CD8-positive, alpha-beta memory T cell (primary cell): ENCODE measurements at regions of chr11 and their contacts with region 1.

Region 1: DNA sequence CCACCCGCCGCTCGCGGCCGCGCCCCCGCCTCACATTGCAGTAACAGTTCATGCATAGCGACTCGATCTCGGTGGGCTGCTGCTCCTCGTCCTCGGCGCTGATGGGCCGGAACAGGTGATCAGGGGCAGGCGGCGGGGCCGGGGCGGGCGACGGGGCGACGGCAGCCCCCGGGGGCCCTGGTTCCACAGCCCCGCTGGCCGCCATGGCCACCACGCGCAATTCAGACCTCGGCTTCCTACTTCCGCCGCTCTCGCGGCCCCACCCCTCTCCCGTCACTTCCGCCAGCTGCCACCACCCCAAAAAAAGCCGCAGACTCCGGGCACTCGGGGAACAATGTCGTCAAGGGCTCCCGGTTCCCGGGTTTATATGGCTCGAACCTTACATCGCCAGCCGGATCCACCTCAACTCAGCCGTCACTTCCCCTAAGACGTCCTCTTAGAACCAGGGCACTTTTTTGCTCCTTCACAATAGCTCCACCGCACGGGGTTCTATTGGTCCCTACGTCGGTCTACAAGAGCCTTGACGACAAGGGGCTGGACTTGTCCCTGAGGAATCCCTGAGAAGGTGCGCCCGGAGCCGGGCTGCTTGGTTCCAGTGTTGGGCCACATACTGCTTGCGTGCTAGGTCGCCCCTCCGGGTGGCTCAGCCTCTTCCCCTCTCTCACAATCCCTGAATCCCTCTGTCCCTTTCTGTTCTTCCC is at the start of gene ZPR1:
- DNase-seq: peak; percentile 82 to 91 (median 85)
- H3K4me3 ChIP-seq: peak within 1 kb of the TSS; percentile 93
- H3K4me3 Mint-ChIP-seq: peak within 1 kb of the TSS; percentile 93 to 100 (median 97)
- H3K27ac ChIP-seq: peak within 1 kb of the TSS; percentile 96
- H3K27ac Mint-ChIP-seq: peak within 1 kb of the TSS; percentile 88 to 99 (median 98)
- H3K4me1 ChIP-seq: peaks cover 29% of the 10 kb centered on the region
- H3K4me1 Mint-ChIP-seq: peaks cover 46 to 69% (median 57%) of the 10 kb centered on the region in 3 donors
- H3K27me3 ChIP-seq: no peaks in the 10 kb centered on the region
- H3K27me3 Mint-ChIP-seq: no peaks in the 10 kb centered on the region
- total RNA-seq, gene ZPR1: 118 to 124 TPM

Region 2: DNA sequence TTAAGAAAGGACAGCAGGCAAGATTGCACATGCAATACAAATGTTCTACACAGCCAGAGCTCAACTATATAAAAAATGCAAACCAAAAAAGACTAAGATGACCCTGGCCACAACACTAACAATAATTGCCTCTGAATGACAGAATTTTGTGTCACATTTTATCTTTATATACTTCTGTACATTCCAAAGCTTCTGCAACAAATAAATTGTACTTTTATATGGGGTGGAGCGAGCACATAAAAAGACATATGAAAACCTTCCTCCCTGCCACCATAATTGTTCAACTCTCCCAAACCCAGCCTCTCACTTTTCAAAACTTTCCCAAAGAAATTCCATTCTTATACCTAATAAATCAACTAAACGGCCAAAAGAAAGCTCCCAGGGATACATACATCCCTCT is 25.8 kb before region 1 on chr11:
- CTCF ChIA-PET with region 1: no interaction called
- POLR2A ChIA-PET with region 1: no interaction called
- DNase-seq: no peak
- H3K4me3 ChIP-seq: no peak overlapping the region
- H3K4me3 Mint-ChIP-seq: no peak overlapping the region
- H3K27ac ChIP-seq: no peak overlapping the region
- H3K27ac Mint-ChIP-seq: no peak overlapping the region
- H3K4me1 ChIP-seq: no peaks in the 10 kb centered on the region
- H3K4me1 Mint-ChIP-seq: peaks cover 0 to 21% (median 16%) of the 10 kb centered on the region in 3 donors
- H3K27me3 ChIP-seq: no peaks in the 10 kb centered on the region
- H3K27me3 Mint-ChIP-seq: no peaks in the 10 kb centered on the region

Region 3: DNA sequence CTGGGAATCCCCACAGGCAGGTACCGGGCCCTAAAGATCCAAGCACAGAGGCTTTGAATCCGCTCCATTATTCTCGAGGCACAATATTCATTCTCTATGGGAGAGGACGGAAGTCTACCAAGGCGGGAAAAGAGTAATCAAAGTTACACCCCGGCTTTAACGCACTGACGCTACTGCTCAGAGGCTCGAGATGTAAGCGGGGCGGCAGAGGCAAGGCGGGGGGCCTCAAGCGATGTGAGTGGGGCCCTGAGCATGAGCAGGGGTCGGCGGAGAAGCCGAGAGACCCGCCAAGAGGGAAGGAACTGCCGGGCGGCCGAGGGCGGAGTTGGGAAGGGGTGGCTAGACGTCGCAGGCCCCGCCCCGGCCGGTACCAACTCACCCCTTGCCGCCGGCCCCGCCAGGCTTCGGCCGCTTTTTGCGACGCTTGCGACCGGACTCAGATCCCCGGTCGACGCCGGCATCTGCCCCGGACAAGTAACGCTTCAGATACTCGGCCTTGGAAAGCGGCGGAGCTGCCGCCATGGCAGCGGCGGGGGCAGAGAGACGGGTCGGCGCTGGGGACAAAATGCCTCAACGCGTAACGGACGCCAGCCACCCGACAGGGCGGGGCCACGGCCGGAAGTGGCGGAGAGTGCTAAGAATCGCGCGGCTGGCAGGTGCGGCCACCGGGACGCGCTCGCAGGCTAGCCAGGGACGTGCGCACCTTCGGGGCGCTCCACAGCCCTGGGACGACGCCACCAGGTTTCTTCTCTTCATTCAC is 15.3 kb before region 1 on chr11 and contains the start of gene BUD13:
- CTCF ChIA-PET with region 1: interaction called, 14 read pairs
- POLR2A ChIA-PET with region 1: interaction called, 24 read pairs
- DNase-seq: peak; percentile 90 to 96 (median 94)
- H3K4me3 ChIP-seq: peak within 1 kb of the TSS; percentile 87
- H3K4me3 Mint-ChIP-seq: peak within 1 kb of the TSS; percentile 90 to 99 (median 94)
- H3K27ac ChIP-seq: peak within 1 kb of the TSS; percentile 88
- H3K27ac Mint-ChIP-seq: peak within 1 kb of the TSS; percentile 90 to 100 (median 98)
- H3K4me1 ChIP-seq: peaks cover 25% of the 10 kb centered on the region
- H3K4me1 Mint-ChIP-seq: peaks cover 31 to 46% (median 41%) of the 10 kb centered on the region in 3 donors
- H3K27me3 ChIP-seq: no peaks in the 10 kb centered on the region
- H3K27me3 Mint-ChIP-seq: no peaks in the 10 kb centered on the region
- total RNA-seq, gene BUD13: 31.4 to 32.3 TPM

Region 4: GRCh38 chr11:116853461-116854073 is 65.6 kb after region 1 on chr11:
- CTCF ChIA-PET with region 1: interaction called, 34 read pairs
- POLR2A ChIA-PET with region 1: interaction called, 5 read pairs
- DNase-seq: peak; percentile 27 to 80 (median 70)
- H3K4me3 ChIP-seq: peak overlapping the region; percentile 27
- H3K4me3 Mint-ChIP-seq: peak overlapping the region; percentile 29 to 85 (median 74)
- H3K27ac ChIP-seq: peak overlapping the region; percentile 68
- H3K27ac Mint-ChIP-seq: peak overlapping the region; percentile 83 to 99 (median 92)
- H3K4me1 ChIP-seq: peaks cover 73% of the 10 kb centered on the region
- H3K4me1 Mint-ChIP-seq: peaks cover 73 to 81% (median 78%) of the 10 kb centered on the region in 3 donors
- H3K27me3 ChIP-seq: no peaks in the 10 kb centered on the region
- H3K27me3 Mint-ChIP-seq: peaks cover 0 to 2% of the 10 kb centered on the region in 2 donors

Region 5: GRCh38 chr11:116865696-116866095 is 77.8 kb after region 1 on chr11:
- CTCF ChIA-PET with region 1: no interaction called
- POLR2A ChIA-PET with region 1: no interaction called
- DNase-seq: no peak
- H3K4me3 ChIP-seq: no peak overlapping the region
- H3K4me3 Mint-ChIP-seq: no peak overlapping the region
- H3K27ac ChIP-seq: no peak overlapping the region
- H3K27ac Mint-ChIP-seq: peak overlapping the region in 4 of 8 donors; percentile 17 to 65 (median 39)
- H3K4me1 ChIP-seq: no peaks in the 10 kb centered on the region
- H3K4me1 Mint-ChIP-seq: peaks cover 0 to 5% (median 0%) of the 10 kb centered on the region in 3 donors
- H3K27me3 ChIP-seq: no peaks in the 10 kb centered on the region
- H3K27me3 Mint-ChIP-seq: no peaks in the 10 kb centered on the region

Region 6: GRCh38 chr11:117098269-117099232 is 310.6 kb after region 1 on chr11 and contains the start of gene SIK3:
- CTCF ChIA-PET with region 1: interaction called, 15 read pairs
- POLR2A ChIA-PET with region 1: interaction called, 5 read pairs
- DNase-seq: peak; percentile 94 to 96 (median 94)
- H3K4me3 ChIP-seq: peak within 1 kb of the TSS; percentile 87
- H3K4me3 Mint-ChIP-seq: peak within 1 kb of the TSS; percentile 90 to 99 (median 97)
- H3K27ac ChIP-seq: peak within 1 kb of the TSS; percentile 99
- H3K27ac Mint-ChIP-seq: peak within 1 kb of the TSS; percentile 99 to 100 (median 100)
- H3K4me1 ChIP-seq: peaks cover 44% of the 10 kb centered on the region
- H3K4me1 Mint-ChIP-seq: peaks cover 58 to 61% (median 59%) of the 10 kb centered on the region in 3 donors
- H3K27me3 ChIP-seq: no peaks in the 10 kb centered on the region
- H3K27me3 Mint-ChIP-seq: peaks cover 0 to 2% of the 10 kb centered on the region in 2 donors
- total RNA-seq, gene SIK3: 42.8 to 48.7 TPM

Region 7: GRCh38 chr11:117143871-117144476 is 356.0 kb after region 1 on chr11 and contains the start of gene PAFAH1B2:
- CTCF ChIA-PET with region 1: interaction called, 5 read pairs
- POLR2A ChIA-PET with region 1: interaction called, 10 read pairs
- DNase-seq: peak; percentile 90 to 96 (median 93)
- H3K4me3 ChIP-seq: peak within 1 kb of the TSS; percentile 98
- H3K4me3 Mint-ChIP-seq: peak within 1 kb of the TSS; percentile 91 to 99 (median 96)
- H3K27ac ChIP-seq: peak within 1 kb of the TSS; percentile 80
- H3K27ac Mint-ChIP-seq: peak within 1 kb of the TSS; percentile 93 to 99 (median 98)
- H3K4me1 ChIP-seq: peaks cover 31% of the 10 kb centered on the region
- H3K4me1 Mint-ChIP-seq: peaks cover 38 to 53% (median 52%) of the 10 kb centered on the region in 3 donors
- H3K27me3 ChIP-seq: no peaks in the 10 kb centered on the region
- H3K27me3 Mint-ChIP-seq: peaks cover 9 to 15% of the 10 kb centered on the region in 2 donors
- total RNA-seq, gene PAFAH1B2: 79.5 to 84.5 TPM